Cardiac septum (tissue), 1 donor: ENCODE measurements at regions of chr6 and their contacts with region 1.

Region 1: GRCh38 chr6:156776840-156777576 is at the start of gene ARID1B:
- DNase-seq: peak; percentile 90
- total RNA-seq, gene ARID1B: 61.1 TPM

Region 2: DNA sequence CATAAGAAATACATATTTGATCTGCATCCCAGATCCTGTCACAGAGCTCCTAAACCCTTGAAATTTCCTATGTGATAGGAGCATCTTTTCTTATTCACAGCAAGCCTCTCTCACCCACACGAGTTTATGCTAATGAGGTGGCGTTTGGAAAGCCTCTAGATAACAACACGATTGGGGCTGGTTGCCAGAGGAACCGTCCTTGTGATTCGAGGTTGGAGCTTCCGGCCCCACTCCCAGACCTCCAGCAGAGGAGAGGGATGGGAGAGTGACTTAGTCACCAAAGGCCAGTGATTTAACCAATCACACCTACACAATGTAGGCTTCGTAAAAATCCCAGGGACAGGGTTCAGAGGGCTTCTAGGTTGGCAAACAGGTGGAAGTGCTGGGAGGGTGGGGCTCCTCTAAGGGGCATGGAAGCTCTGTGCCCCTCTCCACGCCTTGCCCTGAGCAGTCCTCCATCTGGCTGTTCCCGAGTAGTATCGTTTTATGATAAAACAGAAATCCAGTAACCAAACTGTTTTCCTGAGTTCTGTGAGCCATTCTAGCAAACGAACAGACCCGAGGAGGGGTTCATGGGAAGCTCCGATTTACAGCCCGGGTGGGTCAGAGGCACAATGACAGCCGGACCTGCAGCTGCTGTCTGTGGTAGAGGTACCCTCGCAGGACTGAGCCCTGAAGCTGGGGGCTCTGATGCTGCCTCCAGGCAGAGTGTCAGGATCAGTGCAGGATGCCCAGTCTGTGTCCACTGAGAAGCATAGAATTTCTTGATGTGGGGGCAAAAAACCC is 237.9 kb before region 1 on chr6:
- intact Hi-C with region 1: no loop called
- DNase-seq: no peak

Region 3: DNA sequence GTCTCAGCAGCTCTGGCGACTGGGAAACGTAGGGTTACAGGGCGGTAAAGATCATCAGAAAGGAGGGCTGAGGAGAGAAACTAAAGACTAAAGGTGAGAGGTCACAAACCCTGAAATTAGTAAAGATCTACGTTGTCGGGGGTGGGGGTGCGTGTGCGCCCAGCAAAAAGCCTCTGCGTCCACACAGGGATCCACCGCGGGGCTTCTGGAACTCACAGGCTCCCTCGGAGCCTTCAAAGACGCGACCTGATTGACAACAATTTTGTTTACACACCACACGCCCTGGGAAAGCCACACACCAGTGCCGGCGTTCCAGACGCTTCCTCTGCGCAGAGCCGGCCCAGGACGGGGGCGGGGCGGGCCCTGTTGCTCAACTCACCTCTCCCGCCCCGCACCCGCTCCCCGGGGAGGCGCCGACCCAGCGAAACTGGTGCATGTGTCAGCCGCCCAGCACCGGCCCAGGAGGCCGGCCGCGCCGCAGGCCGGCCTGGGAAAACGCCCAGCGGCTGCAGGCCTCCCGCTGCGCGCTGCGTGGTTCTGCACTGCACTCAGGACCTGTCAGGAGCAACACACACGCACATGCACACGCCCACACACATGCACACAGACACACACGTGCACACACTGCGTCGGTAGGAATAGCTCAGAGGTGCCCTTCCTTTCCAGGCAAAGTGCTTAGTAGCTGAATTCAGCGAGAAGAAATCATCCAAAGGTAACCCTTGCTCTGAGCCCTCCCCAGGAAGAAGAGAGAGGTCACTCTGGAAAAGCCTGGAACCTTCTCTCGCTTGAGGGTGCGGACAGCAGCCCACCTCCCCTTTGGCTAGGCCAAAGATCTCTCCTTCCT is 57.1 kb before region 1 on chr6:
- intact Hi-C with region 1: loop called (anchors 5 kb)
- DNase-seq: peak; percentile 96

Region 4: GRCh38 chr6:156953479-156954146 is 176.6 kb after region 1 on chr6:
- intact Hi-C with region 1: loop called (anchors 5 kb)
- DNase-seq: no peak